GM10248 (cell line): ENCODE measurements at regions of chr11 and their contacts with region 1.

Region 1: DNA sequence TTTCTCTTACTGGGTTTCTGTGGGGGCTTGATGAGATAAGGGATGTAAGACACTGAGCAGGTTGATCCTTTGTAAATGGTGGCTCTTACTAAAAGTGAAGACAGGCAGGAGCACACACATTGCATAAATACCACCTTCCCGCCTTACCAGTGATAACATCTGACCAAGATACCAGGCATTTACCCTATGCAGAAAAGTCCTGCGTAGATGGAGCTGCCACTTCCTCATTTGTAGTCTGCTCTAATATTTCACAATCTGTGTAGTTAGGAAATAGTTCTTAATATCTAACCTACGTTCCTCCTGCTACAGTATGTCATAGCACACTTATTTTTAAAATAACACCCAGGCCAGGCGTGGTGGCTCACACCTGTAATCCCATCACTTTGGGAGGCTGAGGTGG is 23.9 kb upstream of the SWAP70 start:
- DNase-seq: no peak
- CTCF ChIP-seq: no peak

Region 2: DNA sequence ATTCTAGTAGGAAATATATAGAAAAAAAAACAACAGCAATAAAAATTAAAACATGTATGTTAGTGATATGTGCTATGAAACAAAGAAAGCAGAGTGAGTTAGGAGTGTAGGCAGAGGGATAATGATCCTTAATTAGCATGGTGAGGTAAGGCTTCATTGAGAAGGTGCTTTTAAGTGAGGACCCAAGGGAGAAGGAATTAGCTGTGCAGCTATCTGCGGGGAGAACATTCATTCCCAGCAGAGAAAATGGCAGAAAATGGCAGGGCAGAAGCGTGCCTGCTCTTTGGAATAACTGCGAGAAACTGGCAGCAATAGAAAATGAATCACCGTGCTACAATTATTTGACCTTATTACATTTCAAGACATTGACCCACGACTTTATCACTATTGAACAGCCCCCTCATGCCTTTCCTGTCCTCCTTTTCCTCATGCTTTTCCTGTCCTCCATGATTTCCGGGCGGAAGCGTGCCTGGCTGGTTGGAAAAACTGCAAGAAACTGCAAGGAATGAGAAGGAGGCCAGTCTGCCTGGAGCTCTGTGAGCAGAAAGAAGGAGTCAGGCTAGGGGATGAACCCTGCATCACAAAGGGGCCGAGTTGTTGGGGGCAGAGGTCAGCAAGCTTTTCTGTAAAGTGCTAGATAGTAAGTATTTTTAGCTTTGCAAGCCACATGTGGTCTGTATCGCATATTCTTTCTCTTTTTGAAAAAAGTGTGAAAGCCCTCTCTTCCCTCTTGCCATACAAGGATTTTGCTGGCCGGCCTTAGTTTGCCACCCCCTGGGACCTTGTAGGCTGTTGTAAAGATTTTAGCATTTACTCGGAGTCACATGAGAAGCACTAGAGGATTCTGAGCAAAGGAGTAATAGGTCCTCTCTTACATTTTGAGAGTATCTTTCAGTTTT is 13.2 kb before region 1 on chr11:
- CTCF ChIA-PET with region 1: interaction called, 18 read pairs
- POLR2A ChIA-PET with region 1: no interaction called
- DNase-seq: no peak
- CTCF ChIP-seq: no peak

Region 3: GRCh38 chr11:9651899-9652748 is 12.1 kb after region 1 on chr11:
- CTCF ChIA-PET with region 1: interaction called, 20 read pairs
- POLR2A ChIA-PET with region 1: no interaction called
- DNase-seq: no peak
- CTCF ChIP-seq: no peak